ENCODE measurements at regions of chr11 and their contacts with region 1.

Region 1: DNA sequence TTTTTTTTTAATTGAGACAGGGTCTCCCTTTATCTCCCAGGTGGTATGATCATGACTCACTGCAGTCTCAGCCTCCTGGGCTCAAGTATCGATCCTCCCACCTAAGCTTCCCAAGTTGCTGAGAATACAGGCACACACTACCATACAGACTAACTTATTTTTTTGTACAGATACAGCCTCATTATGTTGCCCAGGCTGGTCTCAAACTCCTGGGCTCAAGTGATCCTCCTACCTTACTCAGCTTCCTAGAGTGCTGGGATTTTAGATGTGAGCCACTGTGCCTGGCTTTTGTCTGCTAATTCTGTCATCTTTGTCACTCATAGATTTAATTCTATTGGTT is 43.5 kb downstream of the CBL start:
- DNase-seq: no peak
- H3K4me3 ChIP-seq: no peak overlapping the region
- H3K27ac ChIP-seq: no peak overlapping the region
- H3K4me1 ChIP-seq: no peaks in the 10 kb centered on the region
- H3K27me3 ChIP-seq: no peaks in the 10 kb centered on the region
- CTCF ChIP-seq: no peak

Region 2: GRCh38 chr11:119057000-119057769 is 192.5 kb before region 1 on chr11 and contains the start of gene HYOU1:
- CTCF ChIA-PET with region 1: no interaction called
- POLR2A ChIA-PET with region 1: no interaction called
- intact Hi-C with region 1: no loop called
- DNase-seq: peak; percentile 94 to 98
- H3K4me3 ChIP-seq: peak within 1 kb of the TSS; percentile 90
- H3K27ac ChIP-seq: peak within 1 kb of the TSS; percentile 95
- H3K4me1 ChIP-seq: peaks cover 14% of the 10 kb centered on the region
- H3K27me3 ChIP-seq: no peaks in the 10 kb centered on the region
- CTCF ChIP-seq: peak; percentile 41; the same call in 1 of the 2 replicates
- total RNA-seq, gene HYOU1: 92.0 and 117 TPM in 2 replicates

Region 3: GRCh38 chr11:119236490-119236889 is 13.2 kb before region 1 on chr11:
- CTCF ChIA-PET with region 1: interaction called, 11 read pairs
- POLR2A ChIA-PET with region 1: no interaction called
- intact Hi-C with region 1: no loop called
- DNase-seq: no peak
- H3K4me3 ChIP-seq: no peak overlapping the region
- H3K27ac ChIP-seq: 0 out of 2 replicates have a peak overlapping the region, but pooled peaks have one; percentile 11
- H3K4me1 ChIP-seq: peaks cover 3% of the 10 kb centered on the region; the same call in 1 of the 2 replicates
- H3K27me3 ChIP-seq: no peaks in the 10 kb centered on the region
- CTCF ChIP-seq: no peak

Region 4: DNA sequence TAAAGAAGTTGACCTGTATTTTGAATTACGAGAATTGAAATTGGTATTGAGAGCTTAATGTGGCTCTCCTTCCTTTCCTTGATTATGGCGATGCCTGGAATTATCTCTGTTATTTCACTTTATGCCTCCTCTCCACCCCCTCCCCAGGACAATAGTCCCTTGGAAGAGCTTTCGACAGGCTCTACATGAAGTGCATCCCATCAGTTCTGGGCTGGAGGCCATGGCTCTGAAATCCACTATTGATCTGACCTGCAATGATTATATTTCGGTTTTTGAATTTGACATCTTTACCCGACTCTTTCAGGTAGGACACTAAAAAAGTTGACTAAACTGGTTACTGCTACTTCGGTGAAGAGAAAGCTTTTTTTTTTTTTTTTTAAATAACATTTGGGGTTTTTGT is 24.1 kb after region 1 on chr11:
- CTCF ChIA-PET with region 1: no interaction called
- POLR2A ChIA-PET with region 1: interaction called, 15 read pairs
- intact Hi-C with region 1: no loop called
- DNase-seq: no peak
- H3K4me3 ChIP-seq: no peak overlapping the region
- H3K27ac ChIP-seq: no peak overlapping the region
- H3K4me1 ChIP-seq: no peaks in the 10 kb centered on the region
- H3K27me3 ChIP-seq: no peaks in the 10 kb centered on the region
- CTCF ChIP-seq: no peak

Region 5: GRCh38 chr11:119295178-119295577 is 45.5 kb after region 1 on chr11:
- CTCF ChIA-PET with region 1: no interaction called
- POLR2A ChIA-PET with region 1: no interaction called
- intact Hi-C with region 1: no loop called
- DNase-seq: no peak
- H3K4me3 ChIP-seq: no peak overlapping the region
- H3K27ac ChIP-seq: no peak overlapping the region
- H3K4me1 ChIP-seq: no peaks in the 10 kb centered on the region
- H3K27me3 ChIP-seq: no peaks in the 10 kb centered on the region
- CTCF ChIP-seq: peak; percentile 38

Region 6: GRCh38 chr11:119306373-119306890 is 56.8 kb after region 1 on chr11:
- CTCF ChIA-PET with region 1: no interaction called
- POLR2A ChIA-PET with region 1: no interaction called
- intact Hi-C with region 1: no loop called
- DNase-seq: no peak
- H3K4me3 ChIP-seq: no peak overlapping the region
- H3K27ac ChIP-seq: no peak overlapping the region
- H3K4me1 ChIP-seq: no peaks in the 10 kb centered on the region
- H3K27me3 ChIP-seq: no peaks in the 10 kb centered on the region
- CTCF ChIP-seq: no peak